ENCODE measurements at regions of chr13 and their contacts with region 1.

Region 1: GRCh38 chr13:27236478-27236877 is 14.9 kb upstream of the RPL21 start:
- DNase-seq: no peak
- H3K4me3 ChIP-seq: no peak overlapping the region
- H3K27ac ChIP-seq: no peak overlapping the region
- H3K4me1 ChIP-seq: no peaks in the 10 kb centered on the region
- H3K27me3 ChIP-seq: no peaks in the 10 kb centered on the region
- CTCF ChIP-seq: no peak

Region 2: GRCh38 chr13:26996965-26997752 is 239.3 kb before region 1 on chr13:
- CTCF ChIA-PET with region 1: no interaction called
- POLR2A ChIA-PET with region 1: interaction called, 12 read pairs
- intact Hi-C with region 1: no loop called
- DNase-seq: no peak
- H3K4me3 ChIP-seq: no peak overlapping the region
- H3K27ac ChIP-seq: no peak overlapping the region
- H3K4me1 ChIP-seq: no peaks in the 10 kb centered on the region
- H3K27me3 ChIP-seq: no peaks in the 10 kb centered on the region
- CTCF ChIP-seq: no peak

Region 3: GRCh38 chr13:27194895-27195764 is 41.3 kb before region 1 on chr13:
- CTCF ChIA-PET with region 1: no interaction called
- POLR2A ChIA-PET with region 1: interaction called, 12 read pairs
- intact Hi-C with region 1: no loop called
- DNase-seq: peak; percentile 53 to 96
- H3K4me3 ChIP-seq: no peak overlapping the region; the same call in 1 of the 2 replicates
- H3K27ac ChIP-seq: peak overlapping the region; percentile 63
- H3K4me1 ChIP-seq: peaks cover 36% of the 10 kb centered on the region
- H3K27me3 ChIP-seq: no peaks in the 10 kb centered on the region
- CTCF ChIP-seq: no peak

Measured in PC-9 (cell line).